Endothelial cell of umbilical vein (primary cell): ENCODE measurements at regions of chr4 and their contacts with region 1.

Region 1: GRCh38 chr4:151204925-151205524 is 71.9 kb upstream of the PRSS48 start:
- DNase-seq: peak; percentile 41
- H3K4me3 ChIP-seq: no peak overlapping the region
- H3K27ac ChIP-seq: peak overlapping the region; percentile 35
- H3K4me1 ChIP-seq: peaks cover 54% of the 10 kb centered on the region
- H3K27me3 ChIP-seq: no peaks in the 10 kb centered on the region
- CTCF ChIP-seq: no peak
- POLR2A ChIP-seq: no peak

Region 2: DNA sequence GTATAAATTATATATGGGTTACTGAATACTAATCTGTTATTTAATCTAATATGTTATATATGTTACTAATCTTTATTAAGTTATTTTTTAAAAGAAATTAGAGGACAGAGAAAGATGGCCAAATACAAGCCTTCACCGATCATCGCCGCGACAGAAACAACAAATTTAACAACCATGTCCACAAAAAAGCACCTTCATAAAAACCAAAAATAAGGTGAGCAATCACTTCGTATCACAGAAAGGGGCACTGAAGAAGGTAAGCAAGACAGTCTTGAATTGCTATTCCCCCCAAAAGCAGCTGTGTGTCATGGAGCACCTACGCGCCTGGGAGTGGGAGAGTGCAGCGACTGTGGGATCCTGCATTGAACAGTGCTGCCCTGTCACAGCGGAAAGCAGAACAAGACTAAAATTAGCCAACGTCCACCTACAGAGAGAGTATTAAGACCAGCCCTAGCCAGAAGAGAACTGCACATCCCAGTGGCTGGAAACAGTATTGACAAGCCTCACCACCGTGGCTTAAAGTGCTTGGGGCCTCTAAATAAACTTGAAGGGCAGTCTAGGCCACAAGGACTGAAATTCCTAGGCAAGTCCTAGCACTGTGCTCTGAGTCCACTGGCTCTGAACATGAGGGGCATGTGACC is 228.4 kb before region 1 on chr4:
- CTCF ChIA-PET with region 1: no interaction called
- POLR2A ChIA-PET with region 1: no interaction called
- dilution Hi-C with region 1: no loop called
- intact Hi-C with region 1: no loop called
- DNase-seq: no peak
- H3K4me3 ChIP-seq: no peak overlapping the region
- H3K27ac ChIP-seq: no peak overlapping the region
- H3K4me1 ChIP-seq: peaks cover 7% of the 10 kb centered on the region
- H3K27me3 ChIP-seq: no peaks in the 10 kb centered on the region
- CTCF ChIP-seq: no peak
- POLR2A ChIP-seq: no peak

Region 3: DNA sequence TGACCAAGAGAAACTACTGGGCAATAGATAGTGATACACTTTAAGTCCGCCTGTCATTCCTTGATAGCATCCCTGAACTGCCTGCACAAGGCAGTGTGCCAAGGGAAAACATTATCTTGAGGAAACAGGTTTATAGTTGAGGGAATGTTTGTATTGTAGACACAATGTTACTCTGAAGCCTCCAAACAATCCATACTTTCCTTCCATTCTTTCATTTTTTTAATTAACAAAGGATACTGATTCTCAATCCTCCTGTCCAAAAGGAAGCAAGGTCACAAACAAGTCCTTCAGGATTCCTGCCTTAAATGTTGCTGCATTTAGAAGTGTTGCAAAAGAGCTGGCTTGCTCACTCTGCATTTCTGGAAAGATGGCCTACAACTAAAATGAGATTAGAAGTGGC is 10.3 kb after region 1 on chr4:
- CTCF ChIA-PET with region 1: interaction called, 11 read pairs
- POLR2A ChIA-PET with region 1: interaction called, 3 read pairs
- dilution Hi-C with region 1: no loop called
- intact Hi-C with region 1: loop called (anchors 1 kb)
- DNase-seq: peak; percentile 97
- H3K4me3 ChIP-seq: no peak overlapping the region
- H3K27ac ChIP-seq: peak overlapping the region; percentile 38
- H3K4me1 ChIP-seq: peaks cover 34% of the 10 kb centered on the region
- H3K27me3 ChIP-seq: no peaks in the 10 kb centered on the region
- CTCF ChIP-seq: no peak
- POLR2A ChIP-seq: peak; percentile 40